ENCODE measurements at regions of chr1 and their contacts with region 1.

Region 1: DNA sequence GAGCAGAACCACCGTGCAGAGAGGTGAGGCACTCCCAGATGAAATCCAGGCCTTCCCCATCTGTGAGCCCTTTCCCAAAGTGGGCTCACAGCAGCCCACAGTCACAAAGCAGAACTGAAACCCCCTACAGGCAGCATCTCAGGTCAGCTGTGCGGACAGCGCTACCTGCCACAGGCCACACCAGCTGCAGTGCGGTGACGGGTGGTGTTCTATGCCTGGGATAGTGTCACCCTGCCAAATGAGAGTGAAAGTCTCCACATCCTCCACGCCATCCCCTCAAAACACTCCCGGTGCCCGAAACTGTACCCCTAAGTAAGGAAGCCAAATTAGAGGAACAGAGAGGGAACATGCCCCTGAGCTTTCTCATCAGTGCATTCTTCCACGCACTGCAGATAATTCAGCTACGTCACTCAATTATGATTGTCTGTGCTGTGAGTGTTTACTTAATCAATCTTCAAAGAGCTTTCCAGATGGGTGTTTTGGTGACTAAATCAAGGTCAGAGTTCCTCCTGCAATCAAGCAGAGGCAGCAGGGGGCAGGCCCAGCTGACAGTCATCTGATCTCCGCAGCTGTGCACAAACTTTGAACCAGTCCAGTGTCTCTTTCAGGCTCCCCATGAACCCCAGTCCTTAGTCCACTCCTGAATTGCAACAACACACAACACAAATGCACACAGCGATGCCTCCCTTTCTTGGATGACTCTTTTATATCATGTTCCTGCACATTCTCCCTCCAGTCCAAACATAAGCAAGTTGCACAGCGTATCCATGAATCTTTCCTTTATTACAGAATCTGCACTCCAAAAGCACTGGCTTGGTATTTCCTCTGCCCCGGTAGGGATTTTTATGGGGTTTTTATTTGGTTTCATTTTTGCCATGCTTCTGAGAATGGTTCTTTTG is 150.0 kb downstream of the TOMM20 start:
- DNase-seq: peak in 3 of 5 donors; percentile 22 to 72 (median 52)
- H3K4me3 ChIP-seq: peak overlapping the region; percentile 36
- H3K4me3 Mint-ChIP-seq: peak overlapping the region; percentile 35 to 88 (median 75)
- H3K27ac ChIP-seq: peak overlapping the region; percentile 57
- H3K27ac Mint-ChIP-seq: peak overlapping the region; percentile 89 to 99 (median 94)
- H3K4me1 ChIP-seq: peaks cover 38% of the 10 kb centered on the region
- H3K4me1 Mint-ChIP-seq: peaks cover 38 to 62% (median 52%) of the 10 kb centered on the region in 3 donors
- H3K27me3 ChIP-seq: no peaks in the 10 kb centered on the region
- H3K27me3 Mint-ChIP-seq: no peaks in the 10 kb centered on the region

Region 2: GRCh38 chr1:234933475-234933874 is 45.2 kb before region 1 on chr1:
- CTCF ChIA-PET with region 1: no interaction called
- POLR2A ChIA-PET with region 1: no interaction called
- DNase-seq: no peak
- H3K4me3 ChIP-seq: no peak overlapping the region
- H3K4me3 Mint-ChIP-seq: no peak overlapping the region
- H3K27ac ChIP-seq: no peak overlapping the region
- H3K27ac Mint-ChIP-seq: peak overlapping the region in 1 of 8 donors; percentile 66
- H3K4me1 ChIP-seq: peaks cover 12% of the 10 kb centered on the region
- H3K4me1 Mint-ChIP-seq: peaks cover under 1 to 4% (median 2%) of the 10 kb centered on the region in 3 donors
- H3K27me3 ChIP-seq: no peaks in the 10 kb centered on the region
- H3K27me3 Mint-ChIP-seq: no peaks in the 10 kb centered on the region

Region 3: GRCh38 chr1:235011599-235012435 is 33.2 kb after region 1 on chr1:
- CTCF ChIA-PET with region 1: interaction called, 4 read pairs
- POLR2A ChIA-PET with region 1: interaction called, 14 read pairs
- DNase-seq: peak; percentile 86 to 98 (median 93)
- H3K4me3 ChIP-seq: peak overlapping the region; percentile 60
- H3K4me3 Mint-ChIP-seq: peak overlapping the region; percentile 45 to 81 (median 74)
- H3K27ac ChIP-seq: peak overlapping the region; percentile 84
- H3K27ac Mint-ChIP-seq: peak overlapping the region; percentile 93 to 99 (median 96)
- H3K4me1 ChIP-seq: peaks cover 39% of the 10 kb centered on the region
- H3K4me1 Mint-ChIP-seq: peaks cover 44 to 74% (median 52%) of the 10 kb centered on the region in 3 donors
- H3K27me3 ChIP-seq: no peaks in the 10 kb centered on the region
- H3K27me3 Mint-ChIP-seq: peaks cover 0 to 3% of the 10 kb centered on the region in 2 donors

Region 4: DNA sequence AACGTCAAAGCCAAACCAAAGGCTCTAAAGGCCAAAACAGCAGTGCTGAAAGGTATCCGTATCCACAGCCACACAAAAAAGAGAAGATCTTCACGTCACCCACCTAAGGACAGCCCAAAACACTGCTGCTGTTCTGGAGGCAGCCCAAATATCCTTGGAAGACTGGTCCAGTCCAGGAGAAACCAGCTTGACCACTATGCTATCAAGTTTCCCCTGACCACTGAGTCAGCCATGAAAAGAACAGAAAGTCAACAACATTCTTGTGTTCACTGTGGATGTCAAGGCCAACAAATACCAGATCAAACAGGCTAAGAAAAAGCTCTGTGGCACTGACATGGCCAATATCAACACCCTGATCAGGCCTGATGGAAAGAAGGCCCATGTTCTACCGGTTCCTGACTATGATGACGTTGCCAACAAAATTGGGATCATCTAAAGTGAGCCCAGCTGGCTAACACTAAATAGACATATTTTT is 317.3 kb after region 1 on chr1:
- CTCF ChIA-PET with region 1: no interaction called
- POLR2A ChIA-PET with region 1: no interaction called
- DNase-seq: no peak
- H3K4me3 ChIP-seq: no peak overlapping the region
- H3K4me3 Mint-ChIP-seq: peak overlapping the region in 2 of 7 donors; percentile 39 to 61
- H3K27ac ChIP-seq: no peak overlapping the region
- H3K27ac Mint-ChIP-seq: peak overlapping the region; percentile 18 to 96 (median 80)
- H3K4me1 ChIP-seq: peaks cover 63% of the 10 kb centered on the region
- H3K4me1 Mint-ChIP-seq: peaks cover 56 to 73% (median 66%) of the 10 kb centered on the region in 3 donors
- H3K27me3 ChIP-seq: no peaks in the 10 kb centered on the region
- H3K27me3 Mint-ChIP-seq: peaks cover 0 to 3% of the 10 kb centered on the region in 2 donors